Gastrocnemius medialis (tissue), 4 donors: ENCODE measurements at regions of chr15 and their contacts with region 1.

Region 1: GRCh38 chr15:90201130-90201949 is at the start of gene SEMA4B:
- DNase-seq: peak; percentile 23 to 41
- ATAC-seq: peak; percentile 75 to 82
- H3K4me3 ChIP-seq: peak within 1 kb of the TSS; percentile 62 to 91 (median 74)
- H3K27ac ChIP-seq: peak within 1 kb of the TSS; percentile 47 to 70 (median 60)
- H3K4me1 ChIP-seq: peaks cover 9 to 13% of the 10 kb centered on the region in 2 donors
- H3K27me3 ChIP-seq: no peaks in the 10 kb centered on the region
- CTCF ChIP-seq: peak in 1 of 5 experiments; percentile 19
- POLR2A ChIP-seq: peak in 1 of 2 donors; percentile 16
- total RNA-seq, gene SEMA4B: 2.1 to 12.1 (median 6.4) TPM

Region 2: GRCh38 chr15:89912674-89913396 is 288.5 kb before region 1 on chr15 and contains the start of gene ARPIN:
- in situ Hi-C with region 1: loop called in 1 of 4 experiments (anchors 25 kb)
- intact Hi-C with region 1: no loop called
- DNase-seq: peak in 1 of 2 donors; percentile 27
- ATAC-seq: peak; percentile 63 to 84
- H3K4me3 ChIP-seq: peak within 1 kb of the TSS; percentile 71 to 97 (median 80)
- H3K27ac ChIP-seq: peak within 1 kb of the TSS; percentile 47 to 79 (median 68)
- H3K4me1 ChIP-seq: peaks cover 13 to 18% of the 10 kb centered on the region in 2 donors
- H3K27me3 ChIP-seq: no peaks in the 10 kb centered on the region
- CTCF ChIP-seq: no peak
- POLR2A ChIP-seq: no peak
- total RNA-seq, gene ARPIN: 4.8 to 10.9 (median 6.0) TPM

Region 3: GRCh38 chr15:90394748-90395442 is 193.6 kb after region 1 on chr15:
- in situ Hi-C with region 1: no loop called
- intact Hi-C with region 1: no loop called
- DNase-seq: no peak
- ATAC-seq: no peak
- H3K4me3 ChIP-seq: peak overlapping the region; percentile 4 to 21 (median 10)
- H3K27ac ChIP-seq: peak overlapping the region; percentile 91 to 100 (median 96)
- H3K4me1 ChIP-seq: peaks cover 95 to 98% of the 10 kb centered on the region in 2 donors
- H3K27me3 ChIP-seq: no peaks in the 10 kb centered on the region
- CTCF ChIP-seq: no peak
- POLR2A ChIP-seq: no peak